ENCODE measurements at regions of chr4 and their contacts with region 1.

Region 1: DNA sequence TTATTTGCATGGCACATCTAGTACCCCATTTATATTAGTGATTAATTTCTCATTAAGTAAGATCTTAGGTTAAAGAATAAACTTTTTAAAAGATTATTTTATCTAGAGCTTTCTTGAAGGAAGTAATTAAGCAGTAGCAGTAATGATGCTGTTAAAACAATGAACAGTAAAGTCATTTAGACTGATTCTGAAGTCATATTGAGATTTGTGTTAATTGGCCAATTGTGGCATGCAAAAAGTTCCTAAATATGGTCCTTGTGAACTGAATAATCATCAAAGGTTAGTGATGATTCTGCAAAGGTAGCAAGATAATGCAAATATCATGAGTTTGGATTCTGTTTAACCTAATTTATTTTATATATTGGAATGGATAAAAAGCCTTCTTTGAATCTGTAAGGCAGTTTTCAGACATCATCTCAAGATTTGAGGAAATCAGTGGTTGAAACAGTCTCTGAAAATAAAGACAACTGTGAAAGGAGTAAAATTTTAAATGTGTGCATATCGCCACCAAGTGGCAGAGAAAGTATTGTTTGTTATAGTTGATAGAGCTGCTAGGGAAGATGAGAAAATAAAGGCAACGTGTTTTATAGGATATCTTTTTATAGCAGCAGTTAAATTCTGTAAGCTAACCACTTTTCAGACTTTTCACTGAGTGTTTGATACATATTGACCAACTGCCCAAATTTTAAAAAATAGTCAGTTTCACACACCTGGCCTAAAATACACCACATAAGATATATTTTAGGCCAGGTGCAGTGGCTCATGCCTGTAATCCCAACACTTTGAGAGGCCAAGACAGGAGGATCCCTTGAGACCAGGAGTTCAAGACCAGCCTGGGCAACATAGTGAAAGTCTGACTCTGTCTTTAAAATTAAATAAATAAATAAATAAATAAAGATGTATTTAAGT is 79.6 kb downstream of the CCKAR start:
- DNase-seq: no peak
- ATAC-seq: peak; percentile 74
- H3K4me3 ChIP-seq: no peak overlapping the region
- H3K27ac ChIP-seq: no peak overlapping the region
- H3K4me1 ChIP-seq: no peaks in the 10 kb centered on the region
- H3K27me3 ChIP-seq: no peaks in the 10 kb centered on the region
- CTCF ChIP-seq: peak; percentile 50 to 75 (median 71); a peak in 5 of 6 replicates
- POLR2A ChIP-seq: no peak
- RAD21 ChIP-seq: peak; percentile 79

Region 2: GRCh38 chr4:25925486-25926201 is 485.0 kb before region 1 on chr4:
- CTCF ChIA-PET with region 1: no interaction called
- POLR2A ChIA-PET with region 1: no interaction called
- RAD21 ChIA-PET with region 1: no interaction called
- intact Hi-C with region 1: loop called (anchors 5 kb)
- DNase-seq: peak; percentile 35
- ATAC-seq: peak; percentile 87
- H3K4me3 ChIP-seq: no peak overlapping the region
- H3K27ac ChIP-seq: no peak overlapping the region
- H3K4me1 ChIP-seq: no peaks in the 10 kb centered on the region
- H3K27me3 ChIP-seq: no peaks in the 10 kb centered on the region
- CTCF ChIP-seq: peak; percentile 43 to 72 (median 72); a peak in 5 of 6 replicates
- POLR2A ChIP-seq: no peak
- RAD21 ChIP-seq: peak; percentile 68

Region 3: GRCh38 chr4:25953740-25954139 is 456.9 kb before region 1 on chr4:
- CTCF ChIA-PET with region 1: no interaction called
- POLR2A ChIA-PET with region 1: no interaction called
- RAD21 ChIA-PET with region 1: no interaction called
- intact Hi-C with region 1: no loop called
- DNase-seq: peak; percentile 79
- ATAC-seq: peak; percentile 91
- H3K4me3 ChIP-seq: no peak overlapping the region
- H3K27ac ChIP-seq: no peak overlapping the region
- H3K4me1 ChIP-seq: peaks cover 8 to 46% of the 10 kb centered on the region in 2 experiments
- H3K27me3 ChIP-seq: no peaks in the 10 kb centered on the region
- CTCF ChIP-seq: peak in 1 of 3 experiments; percentile 23; a peak in 1 of 6 replicates
- POLR2A ChIP-seq: no peak
- RAD21 ChIP-seq: no peak

Region 4: DNA sequence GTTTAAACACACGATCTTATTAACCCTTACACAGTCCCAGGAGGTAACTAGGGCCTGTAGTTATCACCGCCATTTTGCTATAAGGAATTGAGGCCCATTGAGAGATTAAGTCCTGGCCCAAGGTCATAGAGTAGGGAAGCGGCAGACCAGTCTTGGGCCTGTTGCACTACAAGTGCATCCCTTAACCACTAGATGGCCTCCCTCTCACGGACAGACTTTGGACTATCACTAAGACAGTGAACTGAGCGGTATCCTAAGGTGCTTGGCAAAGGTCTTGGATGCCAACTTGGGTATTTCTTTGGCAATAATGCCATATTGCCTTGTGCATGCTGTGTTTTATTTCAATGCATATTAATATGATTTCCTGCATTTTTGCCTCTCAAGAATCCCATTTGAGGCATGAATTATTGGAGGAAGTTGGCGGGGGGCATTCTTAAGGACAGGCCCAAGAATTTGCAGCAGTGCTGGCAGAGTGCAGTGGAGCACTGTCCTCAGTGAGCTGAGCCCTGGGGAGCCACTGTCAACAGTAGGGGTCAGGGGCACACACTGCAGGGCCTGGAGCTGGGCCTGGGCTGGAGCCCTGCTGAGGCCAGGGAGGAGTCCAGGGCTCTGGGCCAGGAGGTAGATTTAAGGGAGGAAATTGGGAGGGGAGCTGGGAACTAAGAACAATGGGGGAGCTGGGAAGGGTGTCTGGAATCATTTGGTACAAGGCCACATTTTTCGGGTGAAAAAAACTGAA is 349.2 kb before region 1 on chr4:
- CTCF ChIA-PET with region 1: interaction called, 8 read pairs
- POLR2A ChIA-PET with region 1: no interaction called
- RAD21 ChIA-PET with region 1: no interaction called
- intact Hi-C with region 1: loop called (anchors 1 kb)
- DNase-seq: peak; percentile 63
- ATAC-seq: peak; percentile 99
- H3K4me3 ChIP-seq: no peak overlapping the region
- H3K27ac ChIP-seq: no peak overlapping the region
- H3K4me1 ChIP-seq: peaks cover 0 to 5% of the 10 kb centered on the region in 2 experiments; a peak in 1 of 4 replicates
- H3K27me3 ChIP-seq: no peaks in the 10 kb centered on the region
- CTCF ChIP-seq: peak; percentile 62 to 89 (median 81); a peak in 5 of 6 replicates
- POLR2A ChIP-seq: no peak
- RAD21 ChIP-seq: peak; percentile 85

Region 5: GRCh38 chr4:26081795-26082498 is 328.7 kb before region 1 on chr4:
- CTCF ChIA-PET with region 1: interaction called, 4 read pairs
- POLR2A ChIA-PET with region 1: no interaction called
- RAD21 ChIA-PET with region 1: no interaction called
- intact Hi-C with region 1: loop called (anchors 5 kb)
- DNase-seq: peak; percentile 63
- ATAC-seq: peak; percentile 82
- H3K4me3 ChIP-seq: no peak overlapping the region
- H3K27ac ChIP-seq: no peak overlapping the region
- H3K4me1 ChIP-seq: peaks cover 0 to 23% of the 10 kb centered on the region in 2 experiments; a peak in 2 of 4 replicates
- H3K27me3 ChIP-seq: no peaks in the 10 kb centered on the region
- CTCF ChIP-seq: peak; percentile 61 to 83 (median 74)
- POLR2A ChIP-seq: no peak
- RAD21 ChIP-seq: peak; percentile 87

Region 6: GRCh38 chr4:26330186-26330787 is 80.4 kb before region 1 on chr4:
- CTCF ChIA-PET with region 1: interaction called, 29 read pairs
- POLR2A ChIA-PET with region 1: no interaction called
- RAD21 ChIA-PET with region 1: no interaction called
- intact Hi-C with region 1: loop called (anchors 5 kb)
- DNase-seq: peak; percentile 53
- ATAC-seq: peak; percentile 82
- H3K4me3 ChIP-seq: no peak overlapping the region
- H3K27ac ChIP-seq: no peak overlapping the region
- H3K4me1 ChIP-seq: peaks cover 0 to 16% of the 10 kb centered on the region in 2 experiments; a peak in 2 of 4 replicates
- H3K27me3 ChIP-seq: no peaks in the 10 kb centered on the region
- CTCF ChIP-seq: peak; percentile 50 to 77 (median 54); a peak in 4 of 6 replicates
- POLR2A ChIP-seq: no peak
- RAD21 ChIP-seq: peak; percentile 64

Region 7: DNA sequence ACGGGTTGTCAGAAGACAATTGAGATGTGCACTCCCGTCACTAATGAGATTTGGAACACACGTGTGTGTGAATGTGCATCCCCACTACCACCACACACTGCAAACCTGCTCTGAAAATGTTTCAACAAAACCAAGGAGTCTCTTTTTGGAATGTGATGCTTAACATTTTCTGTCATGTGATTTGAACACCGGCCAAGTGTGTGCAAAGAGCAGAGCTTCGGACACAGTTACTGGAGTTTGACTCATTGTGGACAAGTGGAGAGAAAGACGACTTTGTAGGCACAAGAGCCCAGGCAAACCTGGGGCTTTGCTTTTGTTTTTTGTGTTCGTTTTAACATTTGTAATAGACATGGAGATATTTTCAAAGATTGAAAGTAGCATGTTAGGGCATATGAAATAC is 30.5 kb after region 1 on chr4:
- CTCF ChIA-PET with region 1: no interaction called
- POLR2A ChIA-PET with region 1: no interaction called
- RAD21 ChIA-PET with region 1: no interaction called
- intact Hi-C with region 1: no loop called
- DNase-seq: no peak
- ATAC-seq: no peak
- H3K4me3 ChIP-seq: no peak overlapping the region
- H3K27ac ChIP-seq: no peak overlapping the region
- H3K4me1 ChIP-seq: no peaks in the 10 kb centered on the region
- H3K27me3 ChIP-seq: no peaks in the 10 kb centered on the region
- CTCF ChIP-seq: no peak
- POLR2A ChIP-seq: no peak
- RAD21 ChIP-seq: no peak

Measured in HCT116 (cell line).